ENCODE measurements at regions of chr7 and their contacts with region 1.

Region 1: GRCh38 chr7:143008007-143008901 is 18.7 kb downstream of the OR9A2 start:
- DNase-seq: peak; percentile 94
- H3K4me3 ChIP-seq: no peak overlapping the region
- H3K27ac ChIP-seq: no peak overlapping the region
- H3K4me1 ChIP-seq: peaks cover 0 to 9% (median 5%) of the 10 kb centered on the region in 4 donors
- H3K27me3 ChIP-seq: peaks cover 0 to 14% (median 0%) of the 10 kb centered on the region in 4 donors
- CTCF ChIP-seq: peak; percentile 92 to 99 (median 93)
- EP300 ChIP-seq: no peak
- POLR2A ChIP-seq: no peak

Region 2: GRCh38 chr7:142943706-142944268 is 64.5 kb before region 1 on chr7:
- intact Hi-C with region 1: no loop called
- DNase-seq: no peak
- H3K4me3 ChIP-seq: no peak overlapping the region
- H3K27ac ChIP-seq: no peak overlapping the region
- H3K4me1 ChIP-seq: no peaks in the 10 kb centered on the region
- H3K27me3 ChIP-seq: no peaks in the 10 kb centered on the region
- CTCF ChIP-seq: no peak
- EP300 ChIP-seq: no peak
- POLR2A ChIP-seq: no peak

Region 3: GRCh38 chr7:143214789-143215679 is 206.8 kb after region 1 on chr7:
- intact Hi-C with region 1: loop called (anchors 1 kb)
- DNase-seq: no peak
- H3K4me3 ChIP-seq: no peak overlapping the region
- H3K27ac ChIP-seq: no peak overlapping the region
- H3K4me1 ChIP-seq: peaks cover 0 to 14% (median 4%) of the 10 kb centered on the region in 4 donors
- H3K27me3 ChIP-seq: peaks cover 0 to 2% (median 0%) of the 10 kb centered on the region in 4 donors
- CTCF ChIP-seq: peak in 2 of 3 experiments; percentile 98 to 99
- EP300 ChIP-seq: no peak
- POLR2A ChIP-seq: no peak

Measured in esophagus muscularis mucosa (tissue), 4 donors.